Panc1 (cell line): ENCODE measurements at regions of chr5 and their contacts with region 1.

Region 1: GRCh38 chr5:41559184-41559583 is 48.8 kb upstream of the PLCXD3 start:
- DNase-seq: no peak
- ATAC-seq: no peak
- H3K4me3 ChIP-seq: no peak overlapping the region
- H3K27ac ChIP-seq: no peak overlapping the region
- H3K4me1 ChIP-seq: no peaks in the 10 kb centered on the region
- H3K27me3 ChIP-seq: no peaks in the 10 kb centered on the region
- CTCF ChIP-seq: no peak

Region 2: GRCh38 chr5:40962208-40962955 is 596.8 kb before region 1 on chr5:
- CTCF ChIA-PET with region 1: no interaction called
- POLR2A ChIA-PET with region 1: interaction called, 19 read pairs
- in situ Hi-C with region 1: no loop called
- intact Hi-C with region 1: no loop called
- DNase-seq: no peak
- ATAC-seq: no peak
- H3K4me3 ChIP-seq: no peak overlapping the region
- H3K27ac ChIP-seq: no peak overlapping the region
- H3K4me1 ChIP-seq: no peaks in the 10 kb centered on the region
- H3K27me3 ChIP-seq: no peaks in the 10 kb centered on the region
- CTCF ChIP-seq: 0 out of 2 replicates have a peak, but pooled peaks have one; percentile 24

Region 3: DNA sequence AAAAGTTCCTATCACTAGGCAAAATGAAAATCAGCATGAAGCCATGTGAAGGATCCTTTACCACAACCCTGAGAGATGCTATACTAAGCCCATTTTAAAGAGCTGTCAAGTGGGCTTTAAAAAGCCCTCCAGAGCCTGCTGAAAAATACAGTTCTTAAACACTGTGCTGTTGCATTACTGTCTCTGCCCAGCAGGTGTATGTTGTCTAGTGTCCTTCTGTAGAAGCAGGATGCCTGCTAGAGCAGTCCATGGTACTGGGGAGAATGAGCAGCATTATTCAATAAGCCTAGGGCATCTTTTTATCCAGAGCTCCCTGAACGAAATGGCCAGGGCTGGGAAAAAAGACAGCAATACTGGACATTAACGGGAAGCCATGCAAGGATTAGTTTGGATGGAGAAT is 77.4 kb after region 1 on chr5:
- CTCF ChIA-PET with region 1: no interaction called
- POLR2A ChIA-PET with region 1: no interaction called
- in situ Hi-C with region 1: no loop called
- intact Hi-C with region 1: no loop called
- DNase-seq: no peak
- ATAC-seq: no peak
- H3K4me3 ChIP-seq: no peak overlapping the region
- H3K27ac ChIP-seq: no peak overlapping the region
- H3K4me1 ChIP-seq: no peaks in the 10 kb centered on the region
- H3K27me3 ChIP-seq: no peaks in the 10 kb centered on the region
- CTCF ChIP-seq: peak; percentile 36; the same call in 1 of the 2 replicates

Region 4: GRCh38 chr5:42337143-42337542 is 778.0 kb after region 1 on chr5:
- CTCF ChIA-PET with region 1: no interaction called
- POLR2A ChIA-PET with region 1: no interaction called
- in situ Hi-C with region 1: no loop called
- intact Hi-C with region 1: no loop called
- DNase-seq: no peak
- ATAC-seq: no peak
- H3K4me3 ChIP-seq: no peak overlapping the region
- H3K27ac ChIP-seq: no peak overlapping the region
- H3K4me1 ChIP-seq: no peaks in the 10 kb centered on the region
- H3K27me3 ChIP-seq: no peaks in the 10 kb centered on the region
- CTCF ChIP-seq: no peak